PC-9 (cell line): ENCODE measurements at regions of chr1 and their contacts with region 1.

Region 1: DNA sequence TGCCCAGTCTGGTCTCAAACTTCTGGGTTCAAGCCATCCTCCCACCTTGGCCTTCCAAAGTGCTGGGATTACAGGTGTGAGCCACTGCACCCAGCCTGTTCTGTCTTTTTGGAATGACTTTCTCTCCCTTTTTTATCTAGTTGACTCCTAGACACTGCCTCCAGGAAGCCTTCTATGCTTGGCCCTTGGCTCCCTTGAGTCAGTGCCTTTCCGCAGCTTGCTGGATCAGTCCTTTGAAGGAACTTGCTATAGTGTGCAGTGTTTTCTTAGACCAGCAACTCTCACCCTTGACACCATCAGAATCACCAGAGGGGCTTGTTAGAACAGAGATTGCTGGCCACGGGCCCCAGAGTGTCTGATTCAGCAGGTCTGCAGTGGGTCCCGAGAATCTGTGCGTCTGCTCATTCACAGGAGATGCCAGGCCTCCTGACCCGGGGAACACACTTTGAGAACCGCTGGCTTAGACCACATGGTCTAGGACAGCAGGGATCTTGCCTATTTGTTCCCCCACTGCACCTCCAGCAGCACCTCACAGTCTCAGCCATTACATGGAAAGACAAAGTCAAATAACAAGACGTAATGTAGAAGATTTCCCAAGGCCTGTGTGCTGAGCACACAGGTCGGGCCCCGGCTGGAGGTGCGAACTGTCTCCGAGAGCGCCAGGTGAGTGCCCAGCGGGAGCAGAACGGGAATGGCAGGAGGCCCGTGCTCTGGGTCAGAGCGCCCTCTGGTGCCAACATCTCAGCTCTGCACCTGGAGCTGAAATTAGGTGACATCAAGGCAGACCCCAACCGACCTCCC is 27.4 kb upstream of the CTPS1 start:
- DNase-seq: peak; percentile 59 to 86
- H3K4me3 ChIP-seq: no peak overlapping the region
- H3K27ac ChIP-seq: no peak overlapping the region
- H3K4me1 ChIP-seq: peaks cover 39% of the 10 kb centered on the region
- H3K27me3 ChIP-seq: no peaks in the 10 kb centered on the region
- CTCF ChIP-seq: peak; percentile 96

Region 2: DNA sequence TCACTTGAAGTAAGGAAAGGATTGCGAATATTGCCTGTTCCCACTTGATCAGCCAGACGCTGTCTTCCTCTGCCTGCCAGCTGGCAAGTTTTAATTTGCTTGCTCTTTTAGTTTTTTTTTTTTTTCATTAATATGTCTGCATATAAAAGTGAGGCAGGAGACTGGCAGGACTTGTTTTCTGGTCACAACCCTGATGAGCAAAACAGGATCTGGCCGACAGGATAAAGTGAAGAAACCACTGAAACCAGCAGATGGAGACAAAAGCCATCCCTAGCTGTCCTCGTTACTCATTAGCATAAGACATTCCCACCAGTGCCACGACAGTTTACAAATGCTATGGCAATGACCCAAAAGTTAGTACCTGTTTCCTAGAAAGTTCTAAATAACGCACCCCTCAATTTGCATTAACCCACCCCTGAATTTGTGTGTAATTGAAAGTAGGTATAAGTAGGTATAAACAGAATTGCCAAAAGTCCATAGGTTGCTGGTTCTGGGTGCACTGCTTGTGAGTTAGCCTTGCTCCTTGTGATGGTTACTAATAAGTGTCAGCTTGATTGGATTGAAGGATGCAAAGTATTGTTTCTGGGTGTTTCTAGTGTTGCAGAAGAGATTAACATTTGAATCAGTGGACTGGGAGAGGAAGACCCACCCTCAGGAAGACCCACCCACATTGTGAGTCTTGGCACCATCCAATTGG is 359.9 kb before region 1 on chr1:
- CTCF ChIA-PET with region 1: no interaction called
- POLR2A ChIA-PET with region 1: interaction called, 15 read pairs
- intact Hi-C with region 1: loop called (anchors 5 kb)
- DNase-seq: peak; percentile 58 to 60
- H3K4me3 ChIP-seq: no peak overlapping the region
- H3K27ac ChIP-seq: no peak overlapping the region
- H3K4me1 ChIP-seq: no peaks in the 10 kb centered on the region
- H3K27me3 ChIP-seq: no peaks in the 10 kb centered on the region
- CTCF ChIP-seq: peak; percentile 63

Region 3: DNA sequence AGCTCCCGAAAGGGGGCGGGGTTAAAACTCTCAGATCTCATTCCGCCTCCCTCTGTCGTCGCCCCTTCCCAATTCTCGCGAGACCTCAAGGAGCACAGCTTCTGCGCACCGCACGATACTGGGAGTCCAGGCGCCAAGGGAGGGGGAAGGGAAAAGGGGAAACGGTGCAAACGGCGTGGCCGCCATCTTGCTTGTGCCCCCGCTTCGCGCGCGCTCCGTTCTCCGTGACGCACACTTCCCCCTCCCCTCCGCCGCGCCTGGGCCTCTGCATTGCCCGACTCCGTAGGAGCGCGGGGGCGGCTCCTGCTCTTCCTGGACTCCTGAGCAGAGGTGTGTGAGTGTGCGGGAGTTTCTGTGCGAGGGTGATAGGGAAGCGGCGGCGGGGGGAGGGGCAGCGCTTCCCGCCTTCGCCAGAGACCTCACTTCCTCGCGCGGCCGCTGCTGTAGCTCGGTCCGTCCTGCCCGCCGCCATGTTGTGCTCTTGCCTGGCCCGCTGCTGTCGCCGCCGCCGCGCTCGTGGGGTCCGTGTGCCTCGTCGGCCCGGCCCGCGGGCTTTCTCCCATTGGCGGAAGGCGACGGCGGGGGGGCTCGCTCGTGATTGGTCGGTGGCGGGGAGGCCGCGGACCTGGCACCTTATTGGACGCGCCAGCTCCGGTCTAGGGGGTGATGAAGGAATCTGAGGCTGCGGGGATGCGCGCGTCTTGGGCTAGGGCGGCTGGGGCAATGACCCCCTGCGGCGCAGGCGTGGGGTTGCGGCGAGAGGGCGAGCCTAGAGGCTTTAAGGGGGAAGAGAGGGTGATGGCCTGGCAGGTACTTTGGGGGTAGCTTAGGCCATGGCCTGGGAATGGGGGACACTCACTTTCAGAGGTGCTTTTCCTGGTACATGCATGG is 260.4 kb before region 1 on chr1 and contains the start of gene NFYC:
- CTCF ChIA-PET with region 1: interaction called, 4 read pairs
- POLR2A ChIA-PET with region 1: interaction called, 10 read pairs
- intact Hi-C with region 1: no loop called
- DNase-seq: peak; percentile 96 to 98
- H3K4me3 ChIP-seq: peak within 1 kb of the TSS; percentile 74
- H3K27ac ChIP-seq: peak within 1 kb of the TSS; percentile 95
- H3K4me1 ChIP-seq: peaks cover 22% of the 10 kb centered on the region
- H3K27me3 ChIP-seq: no peaks in the 10 kb centered on the region
- CTCF ChIP-seq: no peak
- total RNA-seq, gene NFYC: 79.4 and 91.1 TPM in 2 replicates

Region 4: DNA sequence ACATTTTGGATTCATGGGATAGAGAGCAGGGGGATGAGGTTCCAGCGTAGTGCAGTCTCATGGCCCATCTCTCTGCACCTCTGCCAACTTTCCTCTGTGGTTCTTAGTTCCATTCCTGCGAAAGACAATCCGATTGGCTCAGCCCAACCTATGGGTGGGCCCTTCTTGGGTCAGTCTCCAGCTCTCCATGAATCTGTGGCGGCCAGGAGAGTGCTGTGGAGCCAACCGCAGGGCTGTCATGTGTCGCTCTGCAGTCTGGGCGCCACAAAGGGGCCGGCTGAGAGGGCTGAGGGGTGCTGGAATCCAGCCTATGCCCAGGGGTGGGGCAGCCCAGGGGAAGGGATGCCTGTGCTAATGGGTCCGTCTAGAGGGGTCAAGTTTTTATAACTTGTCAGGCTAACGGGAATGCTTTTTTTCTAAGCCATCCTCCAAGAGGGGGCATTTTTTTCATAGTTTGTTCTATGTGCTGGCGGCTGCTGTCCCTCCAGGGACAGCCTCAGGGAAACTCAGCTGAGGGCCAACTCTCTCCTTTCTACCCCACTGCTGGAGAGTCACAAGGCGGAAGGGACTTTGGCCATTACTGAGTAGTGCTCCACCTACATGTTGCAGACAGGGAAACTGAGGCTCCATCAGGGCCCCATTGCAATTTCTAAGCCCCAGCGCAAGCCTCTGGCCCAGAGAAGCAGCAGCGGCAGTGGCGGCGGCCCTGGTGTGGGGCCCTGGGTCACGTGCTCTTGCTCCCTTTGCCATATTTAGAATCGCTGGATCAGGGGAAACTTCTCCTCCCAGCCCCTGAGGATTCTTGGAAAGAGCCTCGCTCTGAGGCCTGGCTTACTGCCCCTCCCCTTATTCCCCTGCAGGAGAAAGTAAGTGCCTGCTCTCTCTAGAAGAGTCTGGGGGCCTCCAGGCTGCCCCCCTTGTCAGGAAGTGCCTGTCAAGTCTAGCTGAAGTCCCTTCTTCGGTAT is 145.1 kb before region 1 on chr1:
- CTCF ChIA-PET with region 1: no interaction called
- POLR2A ChIA-PET with region 1: no interaction called
- intact Hi-C with region 1: no loop called
- DNase-seq: no peak
- H3K4me3 ChIP-seq: no peak overlapping the region
- H3K27ac ChIP-seq: no peak overlapping the region
- H3K4me1 ChIP-seq: peaks cover 1% of the 10 kb centered on the region; the same call in 1 of the 2 replicates
- H3K27me3 ChIP-seq: peaks cover 5% of the 10 kb centered on the region; the same call in 1 of the 2 replicates
- CTCF ChIP-seq: no peak

Region 5: DNA sequence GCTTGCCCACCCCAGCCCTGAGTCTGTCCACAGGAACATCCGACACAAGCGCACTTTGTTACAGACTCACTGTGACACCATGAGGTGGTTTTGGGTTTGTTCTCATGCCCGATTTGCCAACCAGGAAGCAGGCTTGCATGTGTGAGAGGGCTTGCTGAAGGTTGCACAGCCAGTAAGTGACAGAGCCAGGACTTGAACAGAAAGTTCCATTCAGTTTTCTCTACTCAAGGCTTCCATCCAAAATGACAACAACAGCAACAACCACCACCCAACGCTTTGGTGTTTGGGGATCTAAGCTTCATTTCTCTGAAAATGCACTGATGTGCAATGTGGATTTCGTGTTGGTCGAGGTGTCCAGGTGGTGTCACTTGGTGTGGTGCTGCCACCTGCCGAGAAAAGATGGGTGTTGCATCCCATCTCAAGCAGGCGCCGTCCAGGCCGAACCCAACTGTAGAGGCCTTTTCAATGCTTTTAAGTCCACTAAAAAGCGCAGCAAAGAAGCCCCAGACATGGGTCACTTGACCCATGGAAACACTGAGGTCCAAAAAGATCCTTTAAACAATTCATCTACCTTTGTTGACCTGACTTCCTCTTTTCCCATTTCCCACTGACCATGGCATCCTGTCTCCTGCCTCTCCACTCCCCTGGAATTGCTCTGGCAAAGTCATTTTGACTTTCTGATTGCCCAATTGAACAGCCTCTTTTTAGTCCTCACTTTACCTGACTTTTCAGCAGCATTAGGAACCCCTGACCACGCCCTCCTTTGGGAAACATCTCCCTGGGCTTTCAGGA is 102.1 kb before region 1 on chr1:
- CTCF ChIA-PET with region 1: interaction called, 73 read pairs
- POLR2A ChIA-PET with region 1: interaction called, 10 read pairs
- intact Hi-C with region 1: loop called (anchors 1 kb)
- DNase-seq: peak in 1 of 2 experiments; percentile 78
- H3K4me3 ChIP-seq: no peak overlapping the region
- H3K27ac ChIP-seq: no peak overlapping the region
- H3K4me1 ChIP-seq: no peaks in the 10 kb centered on the region
- H3K27me3 ChIP-seq: no peaks in the 10 kb centered on the region
- CTCF ChIP-seq: peak; percentile 93

Region 6: GRCh38 chr1:40898431-40898901 is 53.7 kb before region 1 on chr1:
- CTCF ChIA-PET with region 1: interaction called, 3 read pairs
- POLR2A ChIA-PET with region 1: no interaction called
- intact Hi-C with region 1: loop called (anchors 1 kb)
- DNase-seq: peak; percentile 79 to 91
- H3K4me3 ChIP-seq: peak overlapping the region; percentile 39; the same call in 1 of the 2 replicates
- H3K27ac ChIP-seq: peak overlapping the region; percentile 97
- H3K4me1 ChIP-seq: peaks cover 74% of the 10 kb centered on the region
- H3K27me3 ChIP-seq: no peaks in the 10 kb centered on the region
- CTCF ChIP-seq: no peak

Region 7: DNA sequence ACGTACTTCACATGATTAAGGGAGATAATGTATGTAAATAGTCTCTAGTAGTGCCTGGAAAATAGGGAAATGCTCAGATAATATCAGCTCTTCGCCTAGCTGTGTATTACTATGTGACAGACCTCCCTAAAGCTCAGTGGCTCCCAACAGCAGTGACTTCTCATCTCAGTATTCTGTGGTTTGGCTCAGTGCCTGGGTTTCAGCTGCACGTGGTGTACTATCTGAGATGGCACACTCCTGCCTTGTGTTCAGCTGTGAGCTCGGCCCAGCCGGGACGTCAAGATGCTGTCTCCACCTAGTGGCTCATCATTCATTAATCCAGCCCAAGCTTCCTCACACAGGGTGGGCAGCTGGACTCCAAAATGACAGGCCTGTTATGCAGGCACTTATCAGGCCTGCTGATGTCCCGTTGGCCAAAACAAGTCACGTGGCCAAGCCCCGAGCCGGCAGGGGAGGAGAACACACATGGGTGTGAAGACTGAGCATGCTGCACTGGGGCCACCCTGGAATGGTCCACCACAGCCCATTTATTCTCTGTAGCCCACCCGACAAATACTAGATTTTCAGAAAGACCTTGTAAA is 51.6 kb after region 1 on chr1:
- CTCF ChIA-PET with region 1: interaction called, 5 read pairs
- POLR2A ChIA-PET with region 1: no interaction called
- intact Hi-C with region 1: loop called (anchors 1 kb)
- DNase-seq: peak; percentile 93 to 96
- H3K4me3 ChIP-seq: no peak overlapping the region
- H3K27ac ChIP-seq: no peak overlapping the region
- H3K4me1 ChIP-seq: peaks cover 13% of the 10 kb centered on the region
- H3K27me3 ChIP-seq: no peaks in the 10 kb centered on the region
- CTCF ChIP-seq: peak; percentile 62